HEK293 (cell line): ENCODE measurements at regions of chr2 and their contacts with region 1.

Region 1: GRCh38 chr2:172931918-172932520 is 143.6 kb upstream of the MAP3K20 start:
- H3K4me3 ChIP-seq: no peak overlapping the region
- H3K27ac ChIP-seq: no peak overlapping the region
- H3K4me1 ChIP-seq: peaks cover 27% of the 10 kb centered on the region
- CTCF ChIP-seq: no peak; the same call in 1 of the 2 replicates

Region 2: GRCh38 chr2:172710584-172711024 is 221.4 kb before region 1 on chr2:
- CTCF ChIA-PET with region 1: interaction called, 11 read pairs
- POLR2A ChIA-PET with region 1: no interaction called
- H3K4me3 ChIP-seq: no peak overlapping the region
- H3K27ac ChIP-seq: no peak overlapping the region
- H3K4me1 ChIP-seq: 0 out of 2 replicates have a peak, but pooled peaks cover 3% of the 10 kb centered on the region
- CTCF ChIP-seq: peak; percentile 68

Region 3: GRCh38 chr2:172821370-172822347 is 110.4 kb before region 1 on chr2:
- CTCF ChIA-PET with region 1: interaction called, 20 read pairs
- POLR2A ChIA-PET with region 1: interaction called, 3 read pairs
- H3K4me3 ChIP-seq: no peak overlapping the region
- H3K27ac ChIP-seq: no peak overlapping the region
- H3K4me1 ChIP-seq: 0 out of 2 replicates have a peak, but pooled peaks cover 2% of the 10 kb centered on the region
- CTCF ChIP-seq: no peak

Region 4: GRCh38 chr2:172848549-172848948 is 83.5 kb before region 1 on chr2:
- CTCF ChIA-PET with region 1: interaction called, 12 read pairs
- POLR2A ChIA-PET with region 1: no interaction called
- H3K4me3 ChIP-seq: no peak overlapping the region
- H3K27ac ChIP-seq: no peak overlapping the region
- H3K4me1 ChIP-seq: no peaks in the 10 kb centered on the region; the same call in 1 of the 2 replicates
- CTCF ChIP-seq: no peak

Region 5: DNA sequence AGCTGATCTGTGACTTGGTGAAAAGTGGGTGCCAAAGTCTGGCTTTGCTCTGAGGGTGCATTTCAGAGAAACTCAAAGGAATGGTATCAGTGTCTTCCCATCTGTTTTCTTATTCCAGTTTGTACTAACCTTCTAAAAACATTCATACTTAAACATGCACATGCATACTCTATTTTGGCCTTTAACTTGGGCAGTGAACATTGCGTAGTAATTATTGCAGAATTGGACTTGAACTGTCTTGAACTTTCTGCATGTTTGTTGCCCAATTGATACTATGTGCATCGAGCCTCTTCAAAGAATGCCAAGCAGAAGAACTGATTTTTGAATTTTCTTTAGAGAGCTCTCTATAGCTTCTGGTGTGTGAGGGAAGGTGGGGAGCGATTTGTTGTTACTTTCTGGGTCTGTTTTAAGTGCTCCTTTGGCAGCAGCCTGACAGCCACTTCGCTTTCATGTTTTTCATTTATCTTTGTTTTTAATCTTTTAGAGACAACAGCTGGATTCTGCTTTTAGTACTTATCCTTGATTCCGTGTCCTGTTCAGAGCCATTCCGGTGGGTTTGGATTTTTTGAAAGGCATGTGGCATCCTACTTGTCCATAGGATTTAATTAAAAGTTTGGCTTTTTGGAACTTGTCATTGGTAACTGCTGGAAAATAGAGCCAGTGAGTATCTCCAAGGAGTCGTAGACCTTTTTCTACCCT is 37.2 kb before region 1 on chr2:
- CTCF ChIA-PET with region 1: interaction called, 10 read pairs
- POLR2A ChIA-PET with region 1: no interaction called
- H3K4me3 ChIP-seq: no peak overlapping the region
- H3K27ac ChIP-seq: no peak overlapping the region
- H3K4me1 ChIP-seq: no peaks in the 10 kb centered on the region; the same call in 1 of the 2 replicates
- CTCF ChIP-seq: no peak

Region 6: GRCh38 chr2:172985139-172985901 is 53.3 kb after region 1 on chr2:
- CTCF ChIA-PET with region 1: interaction called, 10 read pairs
- POLR2A ChIA-PET with region 1: no interaction called
- H3K4me3 ChIP-seq: no peak overlapping the region
- H3K27ac ChIP-seq: no peak overlapping the region
- H3K4me1 ChIP-seq: no peaks in the 10 kb centered on the region; the same call in 1 of the 2 replicates
- CTCF ChIP-seq: no peak

Region 7: DNA sequence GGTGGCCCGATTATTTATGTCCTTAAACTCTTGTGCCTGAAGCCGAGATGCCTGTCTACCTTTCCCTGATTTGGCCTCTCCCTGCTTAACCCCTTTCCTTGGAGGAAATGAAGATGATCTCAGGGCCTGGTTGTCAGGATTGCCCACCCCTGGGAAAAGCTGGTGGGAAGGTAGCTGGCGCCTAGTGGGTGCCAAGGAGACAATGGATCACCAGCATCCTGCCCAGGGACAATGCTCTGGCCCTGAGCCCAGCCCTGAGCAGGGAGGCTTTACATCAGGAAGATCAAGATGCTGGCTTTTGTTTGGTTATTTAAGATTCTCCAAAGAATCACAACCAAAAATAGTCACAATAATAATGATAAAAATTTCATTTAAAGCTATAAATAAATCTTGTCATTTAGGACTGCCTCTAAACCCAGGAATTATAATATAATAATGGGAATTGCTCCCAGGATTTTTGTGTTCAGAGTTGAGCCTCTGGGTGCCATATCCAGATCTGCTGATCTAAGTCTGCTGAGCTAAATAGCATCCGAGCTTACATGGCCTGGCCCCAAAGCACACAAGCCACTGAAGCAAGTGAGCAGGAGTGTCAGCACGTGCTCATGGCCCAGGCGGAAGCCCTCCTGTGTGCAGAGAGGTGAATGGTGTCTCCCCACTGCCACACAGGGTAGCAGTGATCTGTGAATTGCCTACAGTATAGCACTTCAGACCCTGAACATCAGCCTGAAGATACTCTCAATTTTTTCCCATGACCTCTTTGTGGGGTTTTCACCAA is 85.8 kb after region 1 on chr2:
- CTCF ChIA-PET with region 1: no interaction called
- POLR2A ChIA-PET with region 1: no interaction called
- H3K4me3 ChIP-seq: no peak overlapping the region
- H3K27ac ChIP-seq: no peak overlapping the region
- H3K4me1 ChIP-seq: no peaks in the 10 kb centered on the region
- CTCF ChIP-seq: no peak

Region 8: DNA sequence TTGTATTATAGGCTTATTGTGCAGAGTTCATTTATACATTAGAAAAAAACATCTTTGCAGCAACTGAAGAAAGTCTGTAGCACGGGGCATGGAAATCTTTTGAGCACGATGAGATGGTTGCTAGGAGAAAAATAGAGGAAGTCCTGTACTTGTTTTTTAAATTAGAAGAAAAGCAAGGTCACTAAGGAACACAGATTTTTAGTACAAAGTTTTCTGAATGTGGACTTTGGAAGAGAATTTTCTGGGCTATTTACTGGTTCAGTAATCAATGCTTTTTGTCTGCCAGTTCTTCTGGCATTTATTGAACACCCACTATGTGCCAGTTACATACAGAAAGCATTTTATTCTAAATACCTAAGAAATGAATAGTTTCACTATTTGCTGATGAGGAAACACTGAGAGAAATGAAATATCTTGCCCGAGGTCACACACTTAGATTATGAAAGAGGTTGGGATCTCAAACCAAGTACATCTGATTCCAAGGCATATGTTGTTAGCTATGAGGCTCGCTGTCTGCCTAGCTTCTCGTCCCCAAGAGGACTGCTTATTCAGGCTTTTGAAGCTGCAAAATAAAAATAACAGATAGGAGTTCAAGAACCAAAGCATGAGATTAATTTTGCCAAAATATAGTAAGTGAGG is 128.0 kb after region 1 on chr2:
- CTCF ChIA-PET with region 1: no interaction called
- POLR2A ChIA-PET with region 1: no interaction called
- H3K4me3 ChIP-seq: no peak overlapping the region
- H3K27ac ChIP-seq: no peak overlapping the region
- H3K4me1 ChIP-seq: no peaks in the 10 kb centered on the region
- CTCF ChIP-seq: no peak